Transverse colon (tissue), 4 donors: ENCODE measurements at regions of chr9 and their contacts with region 1.

Region 1: GRCh38 chr9:96217754-96218693 is 84.0 kb downstream of the HSD17B3 start:
- DNase-seq: peak; percentile 82
- H3K4me3 ChIP-seq: peak overlapping the region in 3 of 4 donors; percentile 22 to 51 (median 28)
- H3K27ac ChIP-seq: peak overlapping the region; percentile 50 to 77 (median 55)
- H3K4me1 ChIP-seq: peaks cover 0 to 20% (median 9%) of the 10 kb centered on the region in 4 donors
- H3K27me3 ChIP-seq: peaks cover 4% of the 10 kb centered on the region
- CTCF ChIP-seq: peak; percentile 90 to 99 (median 99)
- EP300 ChIP-seq: no peak
- POLR2A ChIP-seq: no peak

Region 2: DNA sequence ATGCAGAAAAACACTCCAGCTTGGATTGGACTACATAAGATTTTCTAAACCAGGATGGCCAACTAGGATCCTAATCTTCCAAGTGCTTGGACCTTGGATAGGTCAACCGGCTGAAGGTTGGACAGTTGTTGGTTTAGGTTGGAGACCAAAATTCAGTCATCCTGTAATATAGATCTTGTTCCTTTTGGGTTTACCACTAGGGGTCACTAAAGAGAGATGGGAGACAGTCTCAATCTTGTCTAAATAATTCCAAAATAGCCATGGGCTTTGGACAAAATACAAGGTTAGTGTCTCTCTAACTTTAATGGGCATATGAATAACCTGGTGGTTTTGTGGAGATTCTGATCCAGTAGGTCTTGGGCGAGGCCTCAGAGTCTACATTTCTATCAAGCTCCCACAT is 491.3 kb before region 1 on chr9:
- in situ Hi-C with region 1: loop called in 2 of 4 experiments (anchors 10 to 25 kb)
- intact Hi-C with region 1: no loop called
- DNase-seq: no peak
- H3K4me3 ChIP-seq: no peak overlapping the region
- H3K27ac ChIP-seq: no peak overlapping the region
- H3K4me1 ChIP-seq: peaks cover 0 to 45% (median 18%) of the 10 kb centered on the region in 4 donors
- H3K27me3 ChIP-seq: no peaks in the 10 kb centered on the region
- CTCF ChIP-seq: peak; percentile 60 to 73 (median 64)
- EP300 ChIP-seq: no peak
- POLR2A ChIP-seq: no peak

Region 3: DNA sequence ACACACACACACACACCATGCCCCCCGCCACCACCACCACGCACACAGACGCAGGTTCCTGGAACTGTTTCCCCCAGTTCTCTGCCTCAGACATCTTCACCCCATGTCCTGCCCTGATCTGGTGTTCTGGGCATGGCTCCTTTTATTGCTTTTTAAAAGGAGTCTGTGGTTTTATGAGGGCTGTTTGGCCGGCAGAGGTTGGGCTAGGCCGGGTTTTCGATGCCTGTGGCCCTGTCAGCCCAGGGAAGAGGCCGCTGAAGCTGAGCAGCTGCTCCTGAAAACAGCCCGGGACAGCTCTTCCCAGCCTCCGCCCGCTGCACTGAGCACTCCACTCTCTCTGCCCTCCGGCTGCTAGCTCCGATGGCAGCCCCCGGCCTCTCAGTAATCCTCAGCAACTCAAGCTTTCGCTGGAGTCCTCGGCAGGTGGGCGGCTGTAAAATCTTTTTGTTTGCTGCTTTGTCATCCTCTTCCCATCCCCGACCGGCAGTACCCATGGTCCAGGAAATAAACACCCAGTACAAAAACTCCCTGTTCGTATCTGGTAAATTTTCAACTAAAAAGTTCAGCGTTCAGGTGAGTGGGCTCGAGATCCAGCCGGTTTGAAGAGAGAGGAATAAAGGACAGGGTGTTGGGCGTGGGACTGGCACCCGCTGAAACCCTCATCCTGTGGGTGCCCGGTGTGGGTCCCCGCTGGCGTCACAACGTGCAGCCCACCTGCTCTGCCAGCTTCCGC is 445.5 kb before region 1 on chr9:
- in situ Hi-C with region 1: no loop called
- intact Hi-C with region 1: loop called (anchors 10 kb)
- DNase-seq: peak; percentile 79
- H3K4me3 ChIP-seq: peak overlapping the region in 2 of 4 donors; percentile 10 to 26
- H3K27ac ChIP-seq: peak overlapping the region; percentile 78 to 86 (median 84)
- H3K4me1 ChIP-seq: peaks cover 10 to 30% (median 24%) of the 10 kb centered on the region in 4 donors
- H3K27me3 ChIP-seq: no peaks in the 10 kb centered on the region
- CTCF ChIP-seq: no peak
- EP300 ChIP-seq: no peak
- POLR2A ChIP-seq: peak; percentile 17

Region 4: GRCh38 chr9:95875305-95876137 is 342.5 kb before region 1 on chr9 and contains the start of gene ERCC6L2:
- in situ Hi-C with region 1: no loop called
- intact Hi-C with region 1: loop called (anchors 5 kb)
- DNase-seq: peak; percentile 96
- H3K4me3 ChIP-seq: peak within 1 kb of the TSS in 1 of 4 donors; percentile 89
- H3K27ac ChIP-seq: no peak within 1 kb of the TSS
- H3K4me1 ChIP-seq: peaks cover 0 to 25% (median 15%) of the 10 kb centered on the region in 4 donors
- H3K27me3 ChIP-seq: no peaks in the 10 kb centered on the region
- CTCF ChIP-seq: peak in 2 of 5 experiments; percentile 4 to 28
- EP300 ChIP-seq: no peak
- POLR2A ChIP-seq: peak; percentile 88
- total RNA-seq, gene ERCC6L2: 62.7 to 84.6 (median 77.3) TPM

Region 5: GRCh38 chr9:96061293-96061987 is 156.6 kb before region 1 on chr9:
- in situ Hi-C with region 1: loop called in 1 of 4 experiments (anchors 25 kb)
- intact Hi-C with region 1: no loop called
- DNase-seq: no peak
- H3K4me3 ChIP-seq: no peak overlapping the region
- H3K27ac ChIP-seq: peak overlapping the region; percentile 31 to 42 (median 38)
- H3K4me1 ChIP-seq: peaks cover 0 to 7% (median 0%) of the 10 kb centered on the region in 4 donors
- H3K27me3 ChIP-seq: no peaks in the 10 kb centered on the region
- CTCF ChIP-seq: peak; percentile 24 to 37 (median 36)
- EP300 ChIP-seq: no peak
- POLR2A ChIP-seq: no peak

Region 6: GRCh38 chr9:96245399-96245798 is 27.4 kb after region 1 on chr9:
- in situ Hi-C with region 1: no loop called
- intact Hi-C with region 1: no loop called
- DNase-seq: no peak
- H3K4me3 ChIP-seq: no peak overlapping the region
- H3K27ac ChIP-seq: no peak overlapping the region
- H3K4me1 ChIP-seq: no peaks in the 10 kb centered on the region
- H3K27me3 ChIP-seq: no peaks in the 10 kb centered on the region
- CTCF ChIP-seq: no peak
- EP300 ChIP-seq: no peak
- POLR2A ChIP-seq: no peak

Region 7: DNA sequence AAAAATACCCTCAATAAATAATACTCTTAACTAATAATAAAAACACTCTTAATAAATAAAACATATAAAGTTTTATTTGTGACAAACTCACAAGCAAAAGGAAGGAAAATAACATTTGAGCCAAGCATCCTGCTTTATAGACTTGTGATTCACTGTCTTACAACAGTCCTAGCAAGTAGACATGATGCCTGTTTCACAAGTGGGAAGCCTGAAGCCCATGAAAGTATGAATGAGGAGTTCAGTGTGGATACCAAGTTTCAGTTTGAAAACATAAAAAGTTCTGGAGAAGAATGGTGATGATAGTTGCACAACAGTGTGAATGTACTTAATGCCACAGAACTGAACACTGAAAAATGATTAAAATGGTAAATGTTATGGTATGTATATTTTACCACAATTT is 242.9 kb after region 1 on chr9:
- in situ Hi-C with region 1: no loop called
- intact Hi-C with region 1: no loop called
- DNase-seq: no peak
- H3K4me3 ChIP-seq: no peak overlapping the region
- H3K27ac ChIP-seq: no peak overlapping the region
- H3K4me1 ChIP-seq: no peaks in the 10 kb centered on the region
- H3K27me3 ChIP-seq: no peaks in the 10 kb centered on the region
- CTCF ChIP-seq: no peak
- EP300 ChIP-seq: no peak
- POLR2A ChIP-seq: no peak